ENCODE measurements at regions of chr1 and their contacts with region 1.

Region 1: DNA sequence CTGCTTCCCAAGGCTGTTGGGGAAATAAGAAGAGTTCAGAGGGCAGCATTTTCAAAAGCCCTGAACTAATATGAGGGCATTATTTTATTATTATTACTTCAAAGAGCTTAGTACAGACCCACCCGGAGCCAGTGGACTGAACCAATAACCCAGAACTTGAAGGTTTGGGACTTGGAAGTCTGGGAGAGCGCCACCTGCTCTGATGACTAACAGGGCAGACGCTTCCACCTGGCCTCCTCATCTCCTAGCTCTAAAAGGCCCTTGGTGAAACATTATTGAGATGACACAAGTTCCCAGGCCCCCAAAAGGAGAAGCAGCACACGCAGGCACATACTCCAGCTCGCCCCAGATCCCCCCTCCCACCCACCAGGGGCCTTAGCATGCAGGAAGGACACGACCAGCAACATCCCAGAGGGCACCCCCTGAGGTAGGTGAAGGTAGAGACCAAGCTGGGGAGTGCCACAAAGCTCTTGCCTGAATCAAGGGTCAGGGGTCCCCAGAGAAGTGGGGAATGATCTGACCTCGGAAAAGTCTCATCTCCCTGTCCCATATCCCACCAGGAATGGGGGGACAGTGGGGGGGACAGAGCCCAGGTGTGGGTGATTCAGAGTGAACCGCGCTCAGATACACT is 1.3 kb downstream of the DLGAP3 start:
- DNase-seq: no peak
- ATAC-seq: no peak
- H3K4me3 ChIP-seq: no peak overlapping the region
- H3K27ac ChIP-seq: no peak overlapping the region
- H3K4me1 ChIP-seq: no peaks in the 10 kb centered on the region
- H3K27me3 ChIP-seq: peaks cover 28% of the 10 kb centered on the region
- CTCF ChIP-seq: no peak

Region 2: GRCh38 chr1:34770891-34771508 is 157.2 kb before region 1 on chr1:
- CTCF ChIA-PET with region 1: no interaction called
- POLR2A ChIA-PET with region 1: no interaction called
- in situ Hi-C with region 1: no loop called
- intact Hi-C with region 1: no loop called
- DNase-seq: no peak
- ATAC-seq: no peak; the same call in 1 of the 2 replicates
- H3K4me3 ChIP-seq: no peak overlapping the region
- H3K27ac ChIP-seq: no peak overlapping the region
- H3K4me1 ChIP-seq: no peaks in the 10 kb centered on the region
- H3K27me3 ChIP-seq: no peaks in the 10 kb centered on the region
- CTCF ChIP-seq: no peak

Region 3: DNA sequence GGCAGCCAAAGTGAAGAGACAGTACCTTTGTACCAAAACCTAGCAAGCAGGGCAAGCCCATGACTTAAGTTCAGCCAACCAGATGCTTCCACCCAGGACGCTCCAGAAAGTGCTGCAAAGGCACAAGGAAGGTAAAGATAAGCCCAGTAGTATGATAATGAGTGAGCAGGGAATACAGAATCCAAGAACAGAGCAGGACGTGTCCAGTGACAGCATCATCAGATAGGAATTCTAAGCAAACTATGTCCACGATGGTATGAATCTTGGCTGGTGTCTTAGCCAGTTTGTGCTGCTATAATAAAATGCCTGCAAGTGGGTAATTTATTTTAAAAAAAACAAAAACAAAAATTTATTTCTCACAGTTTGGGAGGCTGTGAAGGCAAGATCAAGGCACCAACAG is 121.8 kb before region 1 on chr1:
- CTCF ChIA-PET with region 1: no interaction called
- POLR2A ChIA-PET with region 1: no interaction called
- in situ Hi-C with region 1: no loop called
- intact Hi-C with region 1: no loop called
- DNase-seq: no peak
- ATAC-seq: no peak
- H3K4me3 ChIP-seq: no peak overlapping the region
- H3K27ac ChIP-seq: no peak overlapping the region
- H3K4me1 ChIP-seq: no peaks in the 10 kb centered on the region
- H3K27me3 ChIP-seq: no peaks in the 10 kb centered on the region
- CTCF ChIP-seq: no peak

Region 4: DNA sequence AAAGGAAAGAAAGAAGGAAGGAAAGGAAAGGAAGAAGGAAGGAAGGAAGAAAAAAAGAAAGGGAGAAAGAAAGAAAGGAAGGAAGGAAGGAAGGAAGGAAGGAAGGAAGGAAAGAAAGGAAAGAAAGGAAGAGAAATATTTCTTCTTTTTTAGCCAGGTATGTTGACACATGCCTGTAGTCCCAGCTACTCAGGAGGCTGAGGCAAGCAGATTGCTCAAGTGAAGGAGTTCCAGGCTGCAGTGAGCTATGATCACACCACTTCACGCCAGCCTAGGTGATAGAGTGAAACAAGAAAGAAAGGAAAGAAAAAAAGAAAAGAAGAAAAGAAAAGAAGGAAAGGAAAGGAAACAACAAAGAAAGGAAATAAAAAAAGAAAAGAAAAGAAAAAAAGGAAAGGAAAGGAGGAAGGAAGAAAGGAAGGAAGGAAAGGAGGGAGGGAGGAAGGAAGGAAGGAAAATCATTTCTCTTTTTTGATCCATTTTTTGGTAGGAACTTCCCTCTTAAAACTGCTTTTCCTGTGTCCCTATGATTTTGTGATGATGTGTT is 145.2 kb after region 1 on chr1:
- CTCF ChIA-PET with region 1: interaction called, 10 read pairs
- POLR2A ChIA-PET with region 1: no interaction called
- in situ Hi-C with region 1: no loop called
- intact Hi-C with region 1: no loop called
- DNase-seq: no peak
- ATAC-seq: no peak
- H3K4me3 ChIP-seq: no peak overlapping the region
- H3K27ac ChIP-seq: no peak overlapping the region
- H3K4me1 ChIP-seq: no peaks in the 10 kb centered on the region
- H3K27me3 ChIP-seq: no peaks in the 10 kb centered on the region
- CTCF ChIP-seq: no peak

Measured in Panc1 (cell line).